Activated B cell treated with CpG ODN at 0.5 μM for 24 hours (primary cell): ENCODE measurements at regions of chr2 and their contacts with region 1.

Region 1: DNA sequence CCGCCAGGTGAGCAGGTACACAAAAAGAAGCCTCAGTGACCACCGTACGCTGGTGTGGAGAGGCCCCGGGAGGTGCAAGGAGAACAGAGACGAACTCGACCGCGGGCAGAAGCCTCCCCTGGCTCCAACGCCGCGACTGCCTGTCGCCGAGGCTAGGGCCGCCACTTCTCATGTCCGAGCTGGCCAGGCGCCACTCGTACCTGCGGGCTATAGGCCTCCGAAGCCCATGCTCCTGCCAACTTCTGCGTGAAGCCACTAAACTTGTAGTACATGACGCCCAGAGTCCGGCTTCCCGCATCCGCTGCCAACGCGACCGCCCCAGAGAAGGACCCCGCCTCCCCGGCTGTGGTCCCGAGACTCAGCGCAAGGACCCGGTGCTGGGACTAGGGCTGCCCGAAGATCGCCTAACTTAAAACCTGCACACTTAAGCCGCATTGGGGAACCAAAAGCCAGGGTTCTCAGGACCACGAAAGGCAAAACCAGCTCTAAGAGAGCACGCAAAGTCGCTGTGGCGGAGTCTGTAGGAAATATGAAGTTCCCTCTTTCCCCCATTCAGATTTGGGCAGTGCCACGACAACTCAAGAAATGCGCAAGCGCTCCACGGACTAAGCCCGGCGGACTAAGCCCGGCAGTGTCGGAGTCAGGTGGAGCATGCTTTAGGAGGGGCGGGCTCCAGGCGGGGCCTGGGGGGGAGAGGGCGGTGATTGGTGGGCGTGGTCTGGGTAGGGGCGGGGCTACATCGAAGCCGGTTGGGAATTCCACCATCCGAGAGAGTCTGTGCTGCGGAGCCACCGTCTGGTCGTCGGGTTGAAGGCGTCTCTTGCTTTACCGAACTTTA is at the start of gene COX7A2L:
- DNase-seq: peak; percentile 90
- ATAC-seq: peak; percentile 95
- H3K4me3 Mint-ChIP-seq: peak within 1 kb of the TSS; percentile 94
- H3K27ac Mint-ChIP-seq: peak within 1 kb of the TSS; percentile 99
- H3K4me1 Mint-ChIP-seq: peaks cover 44% of the 10 kb centered on the region
- H3K27me3 Mint-ChIP-seq: peaks cover 4% of the 10 kb centered on the region
- CTCF ChIP-seq: no peak
- total RNA-seq, gene COX7A2L: 84.2 and 86.4 TPM in 2 replicates

Region 2: GRCh38 chr2:42102024-42102590 is 259.0 kb before region 1 on chr2:
- CTCF ChIA-PET with region 1: no interaction called
- POLR2A ChIA-PET with region 1: interaction called, 3 read pairs
- intact Hi-C with region 1: loop called (anchors 1 kb)
- DNase-seq: peak; percentile 88
- ATAC-seq: peak; percentile 72
- H3K4me3 Mint-ChIP-seq: peak overlapping the region; percentile 88
- H3K27ac Mint-ChIP-seq: no peak overlapping the region
- H3K4me1 Mint-ChIP-seq: peaks cover 47% of the 10 kb centered on the region
- H3K27me3 Mint-ChIP-seq: no peaks in the 10 kb centered on the region
- CTCF ChIP-seq: no peak

Region 3: DNA sequence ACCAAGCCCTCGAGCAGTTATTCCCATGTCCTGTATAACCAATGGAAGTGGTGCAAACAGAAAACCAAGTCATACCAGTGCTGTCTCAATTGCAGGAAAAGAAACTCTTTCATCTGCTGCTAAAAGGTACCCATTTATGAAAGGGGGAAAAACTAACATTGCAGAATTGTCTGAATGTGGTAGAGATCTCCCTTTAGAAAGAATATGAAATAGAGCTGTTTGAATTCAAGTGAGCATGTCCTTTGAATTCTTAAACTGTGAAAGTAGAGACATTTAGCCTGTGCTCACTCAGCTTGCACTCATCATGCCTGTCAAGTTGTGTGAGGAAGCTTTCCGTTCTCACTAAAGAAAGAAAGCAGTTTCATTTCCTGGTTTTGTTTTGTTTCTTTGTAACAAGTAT is 104.6 kb before region 1 on chr2:
- CTCF ChIA-PET with region 1: no interaction called
- POLR2A ChIA-PET with region 1: no interaction called
- intact Hi-C with region 1: loop called (anchors 5 kb)
- DNase-seq: no peak
- ATAC-seq: peak; percentile 68
- H3K4me3 Mint-ChIP-seq: peak overlapping the region; percentile 4
- H3K27ac Mint-ChIP-seq: peak overlapping the region; percentile 32
- H3K4me1 Mint-ChIP-seq: peaks cover 45% of the 10 kb centered on the region
- H3K27me3 Mint-ChIP-seq: no peaks in the 10 kb centered on the region
- CTCF ChIP-seq: no peak

Region 4: DNA sequence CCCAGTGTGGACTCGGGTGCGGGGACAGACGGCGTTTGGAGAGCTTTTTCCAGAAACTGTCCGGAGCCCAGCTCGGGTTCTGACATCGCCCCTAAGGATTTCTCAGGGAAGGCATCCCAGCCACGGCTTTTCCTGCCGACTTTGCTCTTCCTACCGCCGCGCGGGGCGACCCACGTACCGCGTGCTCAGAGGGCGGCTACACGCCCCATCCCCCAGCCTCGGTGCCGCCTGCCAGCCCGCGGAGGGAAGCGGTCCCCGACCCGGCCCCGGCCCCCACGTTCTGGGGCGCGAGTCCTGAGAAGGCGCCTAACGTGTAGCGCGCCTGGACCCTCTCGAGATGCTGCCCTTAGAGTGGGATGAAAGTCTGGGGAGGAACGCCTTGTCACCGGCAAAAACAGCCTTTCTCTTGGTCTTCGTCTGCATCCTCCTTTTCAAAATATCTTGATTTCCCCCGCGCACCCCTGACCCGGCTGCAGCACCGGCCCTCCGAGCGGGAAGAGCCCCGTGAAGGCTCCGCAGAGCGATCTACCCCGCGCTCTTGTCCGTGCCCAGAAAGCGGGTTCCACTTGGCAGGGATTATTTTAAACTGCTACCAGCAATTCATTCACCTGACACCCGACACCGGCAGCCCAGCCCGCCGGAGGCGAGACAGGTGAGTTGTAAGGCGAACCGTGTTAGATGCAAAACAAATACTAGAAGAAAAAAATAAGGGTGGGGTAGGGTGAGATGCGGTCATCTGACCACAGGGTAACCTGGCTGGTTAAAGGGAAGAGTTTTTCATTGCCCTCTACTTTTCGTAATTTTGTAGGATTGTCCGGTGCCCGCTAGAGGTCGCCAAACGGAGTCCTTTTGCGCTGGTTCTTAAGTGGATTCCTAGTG is 133.5 kb after region 1 on chr2:
- CTCF ChIA-PET with region 1: no interaction called
- POLR2A ChIA-PET with region 1: no interaction called
- intact Hi-C with region 1: loop called (anchors 2 kb)
- DNase-seq: peak; percentile 47
- ATAC-seq: peak; percentile 66
- H3K4me3 Mint-ChIP-seq: peak overlapping the region; percentile 92
- H3K27ac Mint-ChIP-seq: peak overlapping the region; percentile 59
- H3K4me1 Mint-ChIP-seq: peaks cover 8% of the 10 kb centered on the region
- H3K27me3 Mint-ChIP-seq: peaks cover 22% of the 10 kb centered on the region
- CTCF ChIP-seq: no peak

Region 5: DNA sequence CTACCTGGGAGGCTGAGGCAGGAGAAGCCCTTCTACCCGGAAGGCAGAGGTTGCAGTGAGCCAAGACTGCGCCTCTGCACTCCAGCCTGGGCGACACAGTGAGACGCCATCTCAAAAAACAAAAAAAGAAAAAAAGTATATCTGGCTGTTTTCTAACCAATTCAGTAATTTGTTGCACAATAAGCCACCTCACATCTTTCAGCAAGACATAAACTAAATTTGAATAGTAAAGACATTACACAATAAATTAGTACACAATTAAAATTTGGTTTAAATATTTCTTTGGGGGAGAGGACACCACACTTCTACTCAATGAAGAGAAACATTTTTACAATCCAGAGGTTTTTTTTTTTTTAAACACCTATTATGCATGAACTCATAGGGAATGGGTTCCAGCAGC is 171.3 kb after region 1 on chr2:
- CTCF ChIA-PET with region 1: no interaction called
- POLR2A ChIA-PET with region 1: no interaction called
- intact Hi-C with region 1: no loop called
- DNase-seq: no peak
- ATAC-seq: no peak
- H3K4me3 Mint-ChIP-seq: no peak overlapping the region
- H3K27ac Mint-ChIP-seq: no peak overlapping the region
- H3K4me1 Mint-ChIP-seq: no peaks in the 10 kb centered on the region
- H3K27me3 Mint-ChIP-seq: peaks cover 1% of the 10 kb centered on the region
- CTCF ChIP-seq: no peak

Region 6: DNA sequence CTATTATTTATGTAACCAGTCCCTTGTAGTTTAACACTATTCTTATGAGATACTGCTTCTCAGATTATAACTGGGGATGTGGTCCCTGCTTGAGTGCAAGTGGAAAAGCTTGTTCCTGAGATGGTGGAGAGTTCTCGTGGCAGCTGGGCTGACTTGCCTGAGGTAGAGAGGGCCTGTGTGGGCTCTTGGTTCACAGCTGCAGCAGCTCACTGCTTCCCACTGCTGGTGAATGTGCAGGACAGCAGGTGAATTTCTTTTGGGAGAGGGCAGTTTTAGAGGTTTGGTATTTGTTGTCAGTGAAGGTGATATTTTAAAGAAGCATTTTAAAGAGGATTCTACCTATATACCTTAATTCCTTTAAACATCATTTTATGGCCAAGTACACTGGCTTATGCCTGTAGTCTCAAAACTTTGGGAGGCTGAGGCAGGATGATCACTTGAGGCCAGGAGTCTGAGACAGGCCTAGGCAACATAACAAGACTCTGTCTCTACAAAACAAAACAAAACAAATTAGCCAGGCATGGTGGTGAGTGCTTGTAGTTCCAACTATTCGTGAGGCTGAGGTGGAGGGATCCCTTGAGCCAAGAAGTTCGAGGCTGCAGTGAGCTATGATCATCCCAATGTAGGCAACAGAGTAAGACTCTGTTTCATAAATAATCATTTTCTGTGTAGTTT is 302.1 kb after region 1 on chr2:
- CTCF ChIA-PET with region 1: no interaction called
- POLR2A ChIA-PET with region 1: no interaction called
- intact Hi-C with region 1: loop called (anchors 2 kb)
- DNase-seq: peak; percentile 25
- ATAC-seq: peak; percentile 96
- H3K4me3 Mint-ChIP-seq: peak overlapping the region; percentile 12
- H3K27ac Mint-ChIP-seq: peak overlapping the region; percentile 10
- H3K4me1 Mint-ChIP-seq: peaks cover 17% of the 10 kb centered on the region
- H3K27me3 Mint-ChIP-seq: no peaks in the 10 kb centered on the region
- CTCF ChIP-seq: peak; percentile 67

Region 7: GRCh38 chr2:42810121-42810970 is 449.2 kb after region 1 on chr2:
- CTCF ChIA-PET with region 1: no interaction called
- POLR2A ChIA-PET with region 1: interaction called, 5 read pairs
- intact Hi-C with region 1: loop called (anchors 1 kb)
- DNase-seq: peak; percentile 96
- ATAC-seq: peak; percentile 79
- H3K4me3 Mint-ChIP-seq: peak overlapping the region; percentile 94
- H3K27ac Mint-ChIP-seq: peak overlapping the region; percentile 99
- H3K4me1 Mint-ChIP-seq: peaks cover 26% of the 10 kb centered on the region
- H3K27me3 Mint-ChIP-seq: no peaks in the 10 kb centered on the region
- CTCF ChIP-seq: no peak